ENCODE measurements at regions of chr14 and their contacts with region 1.

Region 1: DNA sequence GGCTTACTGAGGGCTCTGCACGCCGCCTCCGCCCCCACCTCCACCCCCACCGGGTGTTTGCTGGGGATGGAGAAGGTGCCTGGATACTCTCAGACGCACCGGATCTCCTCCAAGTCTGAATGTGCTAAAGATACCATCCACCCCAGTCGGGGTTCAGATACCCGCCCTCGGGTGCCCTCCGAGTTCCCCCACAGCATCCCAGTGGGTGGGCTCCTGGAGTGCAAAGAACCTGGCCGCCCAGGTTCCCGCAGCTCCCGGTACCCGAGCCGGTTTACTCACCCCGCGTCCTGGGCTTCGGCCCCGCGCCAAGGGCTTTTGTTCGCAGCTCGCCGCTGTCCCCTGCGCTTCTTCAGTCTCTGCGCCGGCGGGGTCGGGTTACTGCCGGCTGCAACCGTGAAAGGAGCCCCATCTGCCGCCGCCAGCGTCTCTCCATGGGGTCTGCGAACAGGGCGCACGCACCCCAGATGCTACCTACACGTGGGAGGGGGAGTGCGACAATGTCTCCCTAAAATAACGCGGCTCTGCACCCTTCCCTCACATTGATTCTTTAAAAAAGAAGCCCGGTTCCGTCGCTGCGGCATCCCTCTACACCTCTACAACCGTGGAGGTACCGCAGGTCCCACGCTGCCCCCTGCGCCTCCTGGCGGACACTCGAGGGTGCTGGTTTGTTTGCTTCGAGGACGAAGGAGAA is at the start of gene CCDC177:
- DNase-seq: peak; percentile 48
- H3K4me3 ChIP-seq: peak within 1 kb of the TSS in 2 of 3 experiments; percentile 28 to 36
- H3K27ac ChIP-seq: no peak within 1 kb of the TSS
- H3K4me1 ChIP-seq: peaks cover 12% of the 10 kb centered on the region
- H3K27me3 ChIP-seq: peaks cover 37% of the 10 kb centered on the region
- CTCF ChIP-seq: peak; percentile 87 to 99
- total RNA-seq, gene CCDC177: not detected

Region 2: GRCh38 chr14:69242311-69243224 is 331.8 kb before region 1 on chr14:
- CTCF ChIA-PET with region 1: no interaction called
- dilution Hi-C with region 1: no loop called
- in situ Hi-C with region 1: no loop called
- intact Hi-C with region 1: loop called (anchors 2 kb)
- DNase-seq: peak; percentile 32
- H3K4me3 ChIP-seq: no peak overlapping the region
- H3K27ac ChIP-seq: no peak overlapping the region
- H3K4me1 ChIP-seq: no peaks in the 10 kb centered on the region
- H3K27me3 ChIP-seq: no peaks in the 10 kb centered on the region
- CTCF ChIP-seq: peak; percentile 62 to 66

Region 3: DNA sequence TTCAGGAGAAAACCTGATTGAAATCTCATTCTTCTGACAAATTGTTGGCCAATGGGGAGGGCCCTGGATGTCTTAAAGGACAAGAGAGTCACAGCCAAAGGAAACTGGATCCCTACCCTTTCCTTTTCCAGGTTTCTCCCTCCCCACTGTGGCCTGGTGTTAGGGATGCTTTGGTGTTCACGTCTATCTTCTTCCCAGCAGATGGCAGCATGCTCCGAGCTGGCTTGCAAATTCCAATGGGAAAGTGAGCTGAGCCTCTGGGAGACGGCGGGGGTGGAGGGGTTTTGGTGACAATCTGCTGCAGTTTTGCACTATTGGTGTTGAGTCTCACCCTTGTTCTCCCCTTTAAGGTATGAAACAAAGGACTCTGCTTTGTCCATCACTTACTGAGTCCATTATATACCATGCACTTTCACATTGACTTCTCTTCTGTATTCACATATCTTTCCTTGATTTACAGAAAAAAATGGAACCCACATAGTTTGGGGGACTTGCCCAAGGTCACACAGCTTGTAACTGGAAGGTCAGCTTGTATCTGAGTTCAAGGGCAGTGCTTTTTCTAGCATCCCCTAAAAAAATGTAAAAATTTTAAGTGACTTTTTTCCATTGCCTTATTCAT is 39.1 kb before region 1 on chr14:
- CTCF ChIA-PET with region 1: interaction called, 3 read pairs
- dilution Hi-C with region 1: no loop called
- in situ Hi-C with region 1: loop called (anchors 5 kb)
- intact Hi-C with region 1: loop called (anchors 1 kb)
- DNase-seq: peak; percentile 31
- H3K4me3 ChIP-seq: no peak overlapping the region
- H3K27ac ChIP-seq: no peak overlapping the region
- H3K4me1 ChIP-seq: peaks cover 5% of the 10 kb centered on the region
- H3K27me3 ChIP-seq: no peaks in the 10 kb centered on the region
- CTCF ChIP-seq: peak; percentile 85 to 88

Measured in mammary epithelial cell (primary cell).